Caco-2 (cell line): ENCODE measurements at regions of chr1 and their contacts with region 1.

Region 1: GRCh38 chr1:151968058-151968457 is 25.6 kb downstream of the S100A10 start:
- DNase-seq: peak; percentile 69 to 77
- H3K4me3 ChIP-seq: no peak overlapping the region
- H3K4me3 Mint-ChIP-seq: no peak overlapping the region
- H3K27ac Mint-ChIP-seq: no peak overlapping the region
- H3K4me1 ChIP-seq: peaks cover 52% of the 10 kb centered on the region
- H3K4me1 Mint-ChIP-seq: peaks cover 34% of the 10 kb centered on the region
- H3K27me3 ChIP-seq: no peaks in the 10 kb centered on the region
- H3K27me3 Mint-ChIP-seq: no peaks in the 10 kb centered on the region
- CTCF ChIP-seq: peak; percentile 70 to 80

Region 2: GRCh38 chr1:151898513-151898991 is 69.5 kb before region 1 on chr1:
- CTCF ChIA-PET with region 1: no interaction called
- POLR2A ChIA-PET with region 1: no interaction called
- intact Hi-C with region 1: no loop called
- DNase-seq: no peak
- H3K4me3 ChIP-seq: no peak overlapping the region
- H3K4me3 Mint-ChIP-seq: no peak overlapping the region
- H3K27ac Mint-ChIP-seq: no peak overlapping the region
- H3K4me1 ChIP-seq: no peaks in the 10 kb centered on the region
- H3K4me1 Mint-ChIP-seq: no peaks in the 10 kb centered on the region
- H3K27me3 ChIP-seq: no peaks in the 10 kb centered on the region
- H3K27me3 Mint-ChIP-seq: no peaks in the 10 kb centered on the region
- CTCF ChIP-seq: no peak

Region 3: DNA sequence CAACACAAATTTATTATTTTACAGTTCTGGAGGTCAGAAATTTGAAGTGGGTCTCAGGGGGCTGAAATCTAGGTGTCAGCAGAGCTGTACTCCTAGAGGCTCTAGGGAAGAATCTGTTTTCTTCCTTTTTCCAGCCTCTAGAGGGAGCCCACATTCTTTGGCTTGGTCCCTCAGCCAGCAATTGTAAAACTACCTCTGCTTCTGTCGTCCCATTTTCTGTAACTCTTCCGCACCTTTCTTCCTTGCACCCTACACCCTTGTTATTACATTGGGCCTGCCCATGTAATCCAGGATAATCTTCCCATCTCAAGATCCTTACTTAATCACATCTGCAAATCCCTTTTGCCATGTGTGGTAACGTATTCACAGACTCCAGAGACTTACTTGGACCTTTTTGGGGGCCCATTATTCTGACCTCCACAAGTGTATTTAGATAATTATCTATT is 34.0 kb before region 1 on chr1:
- CTCF ChIA-PET with region 1: interaction called, 36 read pairs
- POLR2A ChIA-PET with region 1: no interaction called
- intact Hi-C with region 1: loop called (anchors 1 kb)
- DNase-seq: peak; percentile 48 to 78
- H3K4me3 ChIP-seq: no peak overlapping the region
- H3K4me3 Mint-ChIP-seq: no peak overlapping the region
- H3K27ac Mint-ChIP-seq: peak overlapping the region; percentile 63
- H3K4me1 ChIP-seq: peaks cover 32% of the 10 kb centered on the region
- H3K4me1 Mint-ChIP-seq: peaks cover 34% of the 10 kb centered on the region
- H3K27me3 ChIP-seq: no peaks in the 10 kb centered on the region
- H3K27me3 Mint-ChIP-seq: no peaks in the 10 kb centered on the region
- CTCF ChIP-seq: peak; percentile 85 to 87

Region 4: DNA sequence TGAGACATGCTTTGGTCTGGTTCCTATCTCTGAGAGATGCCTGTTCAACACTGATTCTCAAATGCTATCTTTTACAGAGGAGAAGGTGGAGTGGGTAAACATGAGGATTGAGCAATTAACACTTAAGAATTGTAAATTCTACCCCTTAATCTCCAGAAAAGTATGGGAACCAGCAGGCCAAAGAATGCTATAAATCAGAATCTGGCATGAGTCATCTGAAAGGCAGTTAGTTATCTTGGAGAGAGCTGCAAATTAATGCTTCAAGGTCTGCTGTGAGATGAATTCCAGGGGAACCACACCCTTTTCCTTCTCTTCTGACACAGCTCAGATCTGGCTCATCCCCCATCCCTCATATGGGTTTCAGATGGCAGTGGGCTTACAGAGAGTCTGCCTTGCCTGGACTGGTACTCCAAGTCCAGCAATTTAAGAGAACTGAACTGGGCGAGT is 20.4 kb after region 1 on chr1:
- CTCF ChIA-PET with region 1: interaction called, 18 read pairs
- POLR2A ChIA-PET with region 1: interaction called, 11 read pairs
- intact Hi-C with region 1: no loop called
- DNase-seq: peak; percentile 83 to 88
- H3K4me3 ChIP-seq: no peak overlapping the region
- H3K4me3 Mint-ChIP-seq: peak overlapping the region; percentile 88
- H3K27ac Mint-ChIP-seq: peak overlapping the region; percentile 99
- H3K4me1 ChIP-seq: peaks cover 67% of the 10 kb centered on the region
- H3K4me1 Mint-ChIP-seq: peaks cover 54% of the 10 kb centered on the region
- H3K27me3 ChIP-seq: no peaks in the 10 kb centered on the region
- H3K27me3 Mint-ChIP-seq: no peaks in the 10 kb centered on the region
- CTCF ChIP-seq: no peak

Region 5: GRCh38 chr1:152001391-152002249 is 33.6 kb after region 1 on chr1:
- CTCF ChIA-PET with region 1: interaction called, 249 read pairs
- POLR2A ChIA-PET with region 1: interaction called, 4 read pairs
- intact Hi-C with region 1: loop called (anchors 1 kb)
- DNase-seq: peak; percentile 89 to 91
- H3K4me3 ChIP-seq: no peak overlapping the region
- H3K4me3 Mint-ChIP-seq: no peak overlapping the region
- H3K27ac Mint-ChIP-seq: peak overlapping the region; percentile 82
- H3K4me1 ChIP-seq: peaks cover 48% of the 10 kb centered on the region
- H3K4me1 Mint-ChIP-seq: peaks cover 49% of the 10 kb centered on the region
- H3K27me3 ChIP-seq: no peaks in the 10 kb centered on the region
- H3K27me3 Mint-ChIP-seq: no peaks in the 10 kb centered on the region
- CTCF ChIP-seq: peak; percentile 92 to 94

Region 6: DNA sequence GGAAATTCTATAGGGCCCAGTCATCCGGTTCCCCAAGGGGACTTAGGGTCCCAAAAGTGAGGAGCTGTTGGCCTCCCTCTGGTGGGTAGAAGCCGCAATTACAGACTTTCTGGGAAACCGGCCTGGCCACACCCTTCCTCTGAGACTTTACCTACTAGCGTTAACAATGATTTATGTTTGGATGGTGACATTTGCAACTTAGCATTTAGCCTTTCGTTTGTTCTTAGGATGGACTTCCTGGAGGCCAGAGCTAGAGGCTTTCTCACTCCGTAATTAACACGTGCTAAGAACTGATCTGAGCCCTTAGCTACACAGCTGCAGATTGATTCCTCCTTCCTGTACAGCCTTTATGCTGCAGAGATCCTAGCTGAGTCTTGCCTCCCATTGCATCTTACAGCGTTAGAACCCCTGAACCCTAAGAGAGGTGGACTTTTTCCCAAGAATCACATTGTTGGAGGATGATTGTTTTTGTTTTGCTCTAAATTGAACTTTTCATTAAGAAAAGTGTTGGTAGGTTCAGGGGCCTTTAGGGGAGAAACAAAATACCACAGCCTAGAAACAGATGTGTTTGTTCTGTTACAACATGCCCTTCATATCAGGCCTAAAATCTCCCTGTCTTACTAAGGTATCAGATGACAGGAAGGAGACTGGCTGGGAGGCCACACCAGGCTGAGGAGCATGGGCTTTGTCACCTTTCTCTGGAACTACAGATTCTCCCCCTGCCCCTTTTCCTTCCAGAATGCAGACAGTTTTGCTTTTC is 66.8 kb after region 1 on chr1:
- CTCF ChIA-PET with region 1: interaction called, 24 read pairs
- POLR2A ChIA-PET with region 1: no interaction called
- intact Hi-C with region 1: loop called (anchors 2 kb)
- DNase-seq: peak; percentile 78 to 82
- H3K4me3 ChIP-seq: peak overlapping the region; percentile 85
- H3K4me3 Mint-ChIP-seq: peak overlapping the region; percentile 97
- H3K27ac Mint-ChIP-seq: peak overlapping the region; percentile 94
- H3K4me1 ChIP-seq: peaks cover 18% of the 10 kb centered on the region
- H3K4me1 Mint-ChIP-seq: peaks cover 7% of the 10 kb centered on the region
- H3K27me3 ChIP-seq: no peaks in the 10 kb centered on the region
- H3K27me3 Mint-ChIP-seq: no peaks in the 10 kb centered on the region
- CTCF ChIP-seq: peak; percentile 80 to 88

Region 7: GRCh38 chr1:152374451-152374850 is 406.4 kb after region 1 on chr1:
- CTCF ChIA-PET with region 1: no interaction called
- POLR2A ChIA-PET with region 1: no interaction called
- intact Hi-C with region 1: no loop called
- DNase-seq: no peak
- H3K4me3 ChIP-seq: no peak overlapping the region
- H3K4me3 Mint-ChIP-seq: no peak overlapping the region
- H3K27ac Mint-ChIP-seq: no peak overlapping the region
- H3K4me1 ChIP-seq: no peaks in the 10 kb centered on the region
- H3K4me1 Mint-ChIP-seq: no peaks in the 10 kb centered on the region
- H3K27me3 ChIP-seq: no peaks in the 10 kb centered on the region; the same call in 1 of the 2 replicates
- H3K27me3 Mint-ChIP-seq: peaks cover 24% of the 10 kb centered on the region
- CTCF ChIP-seq: no peak